HEK293 (cell line): ENCODE measurements at regions of chr6 and their contacts with region 1.

Region 1: GRCh38 chr6:19013026-19013705 is 626.0 kb downstream of the RNF144B start:
- H3K4me3 ChIP-seq: no peak overlapping the region
- H3K27ac ChIP-seq: no peak overlapping the region
- H3K4me1 ChIP-seq: no peaks in the 10 kb centered on the region
- CTCF ChIP-seq: no peak

Region 2: DNA sequence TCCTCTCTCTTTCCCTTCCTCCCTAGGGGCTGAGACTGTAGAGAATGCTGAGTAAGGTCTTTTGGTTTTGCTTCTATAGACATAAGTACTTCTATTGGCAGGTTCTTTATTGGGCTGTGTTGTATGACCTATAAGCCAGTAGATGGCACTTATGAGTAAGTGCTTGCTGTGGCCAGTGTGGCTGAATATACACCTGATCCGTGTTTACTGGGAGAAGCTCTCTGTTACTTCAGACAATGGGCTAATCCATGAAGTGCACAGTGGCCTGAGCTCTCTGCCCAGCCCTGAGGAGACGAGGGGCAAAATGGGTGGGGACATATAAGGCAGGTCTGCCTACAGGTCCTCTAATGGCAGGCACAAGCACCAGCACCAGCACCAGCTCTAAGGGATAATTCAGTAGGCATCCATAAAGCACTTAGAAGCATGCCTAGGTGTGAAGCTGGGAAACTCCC is 15.8 kb before region 1 on chr6:
- CTCF ChIA-PET with region 1: interaction called, 10 read pairs
- POLR2A ChIA-PET with region 1: no interaction called
- H3K4me3 ChIP-seq: no peak overlapping the region
- H3K27ac ChIP-seq: no peak overlapping the region
- H3K4me1 ChIP-seq: peaks cover 8% of the 10 kb centered on the region; the same call in 1 of the 2 replicates
- CTCF ChIP-seq: peak; percentile 34; the same call in 1 of the 2 replicates

Region 3: GRCh38 chr6:19083809-19084208 is 70.6 kb after region 1 on chr6:
- CTCF ChIA-PET with region 1: no interaction called
- POLR2A ChIA-PET with region 1: no interaction called
- H3K4me3 ChIP-seq: no peak overlapping the region
- H3K27ac ChIP-seq: no peak overlapping the region
- H3K4me1 ChIP-seq: no peaks in the 10 kb centered on the region; the same call in 1 of the 2 replicates
- CTCF ChIP-seq: no peak